B cell (primary cell): ENCODE measurements at regions of chr12 and their contacts with region 1.

Region 1: DNA sequence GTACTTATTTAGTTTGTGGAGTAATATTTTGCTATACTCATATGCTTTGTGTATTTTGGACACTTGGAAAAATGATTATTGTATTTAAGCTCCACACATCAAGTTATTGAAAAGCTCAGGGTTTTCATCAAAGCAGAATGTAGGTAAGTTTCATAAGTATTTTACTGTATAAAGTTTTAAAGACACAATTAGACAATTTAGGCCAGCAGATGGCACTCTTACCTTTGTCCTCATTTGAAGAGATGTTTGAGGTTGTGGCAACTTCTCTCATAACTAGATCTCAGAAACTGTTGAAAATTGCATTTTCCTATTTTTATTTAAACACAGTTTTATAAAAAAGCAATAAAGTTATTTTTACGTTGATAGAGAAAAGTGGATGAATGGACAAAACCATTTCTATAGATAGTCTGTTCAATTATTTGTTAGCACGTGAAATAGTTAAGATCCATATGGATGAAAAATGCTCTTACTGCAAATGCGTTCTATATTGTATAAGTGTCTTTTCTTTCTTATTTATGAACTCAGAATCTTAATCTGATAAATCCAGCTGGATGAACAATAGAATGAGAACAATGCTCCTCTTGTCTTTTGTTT is 300.0 kb downstream of the AEBP2 start:
- DNase-seq: no peak
- ATAC-seq: no peak
- H3K4me3 ChIP-seq: no peak overlapping the region
- H3K4me3 Mint-ChIP-seq: no peak overlapping the region
- H3K27ac ChIP-seq: no peak overlapping the region
- H3K27ac Mint-ChIP-seq: no peak overlapping the region
- H3K4me1 ChIP-seq: no peaks in the 10 kb centered on the region
- H3K4me1 Mint-ChIP-seq: no peaks in the 10 kb centered on the region
- H3K27me3 ChIP-seq: no peaks in the 10 kb centered on the region
- H3K27me3 Mint-ChIP-seq: no peaks in the 10 kb centered on the region
- CTCF ChIP-seq: peak; percentile 37

Region 2: GRCh38 chr12:19826988-19827550 is 87.8 kb after region 1 on chr12:
- CTCF ChIA-PET with region 1: no interaction called
- POLR2A ChIA-PET with region 1: no interaction called
- intact Hi-C with region 1: no loop called
- DNase-seq: no peak
- ATAC-seq: no peak
- H3K4me3 ChIP-seq: no peak overlapping the region
- H3K4me3 Mint-ChIP-seq: no peak overlapping the region
- H3K27ac ChIP-seq: no peak overlapping the region
- H3K27ac Mint-ChIP-seq: no peak overlapping the region
- H3K4me1 ChIP-seq: no peaks in the 10 kb centered on the region
- H3K4me1 Mint-ChIP-seq: no peaks in the 10 kb centered on the region
- H3K27me3 ChIP-seq: no peaks in the 10 kb centered on the region
- H3K27me3 Mint-ChIP-seq: no peaks in the 10 kb centered on the region
- CTCF ChIP-seq: no peak

Region 3: GRCh38 chr12:21169878-21170472 is 1430.7 kb after region 1 on chr12:
- CTCF ChIA-PET with region 1: no interaction called
- POLR2A ChIA-PET with region 1: no interaction called
- intact Hi-C with region 1: loop called (anchors 10 kb)
- DNase-seq: peak; percentile 3
- ATAC-seq: no peak
- H3K4me3 ChIP-seq: no peak overlapping the region
- H3K4me3 Mint-ChIP-seq: no peak overlapping the region
- H3K27ac ChIP-seq: no peak overlapping the region
- H3K27ac Mint-ChIP-seq: no peak overlapping the region
- H3K4me1 ChIP-seq: no peaks in the 10 kb centered on the region
- H3K4me1 Mint-ChIP-seq: no peaks in the 10 kb centered on the region
- H3K27me3 ChIP-seq: no peaks in the 10 kb centered on the region
- H3K27me3 Mint-ChIP-seq: no peaks in the 10 kb centered on the region
- CTCF ChIP-seq: peak; percentile 50